OCI-LY7 (cell line): ENCODE measurements at regions of chr19 and their contacts with region 1.

Region 1: GRCh38 chr19:10112895-10113591 is 1.6 kb downstream of the P2RY11 start:
- DNase-seq: peak; percentile 73
- H3K4me3 ChIP-seq: no peak overlapping the region
- H3K27ac ChIP-seq: peak overlapping the region; percentile 55
- H3K4me1 ChIP-seq: peaks cover 28% of the 10 kb centered on the region
- CTCF ChIP-seq: peak; percentile 86

Region 2: GRCh38 chr19:9891609-9892373 is 221.3 kb before region 1 on chr19:
- CTCF ChIA-PET with region 1: no interaction called
- POLR2A ChIA-PET with region 1: no interaction called
- intact Hi-C with region 1: no loop called
- DNase-seq: no peak
- H3K4me3 ChIP-seq: no peak overlapping the region
- H3K27ac ChIP-seq: no peak overlapping the region
- H3K4me1 ChIP-seq: no peaks in the 10 kb centered on the region
- CTCF ChIP-seq: no peak

Region 3: DNA sequence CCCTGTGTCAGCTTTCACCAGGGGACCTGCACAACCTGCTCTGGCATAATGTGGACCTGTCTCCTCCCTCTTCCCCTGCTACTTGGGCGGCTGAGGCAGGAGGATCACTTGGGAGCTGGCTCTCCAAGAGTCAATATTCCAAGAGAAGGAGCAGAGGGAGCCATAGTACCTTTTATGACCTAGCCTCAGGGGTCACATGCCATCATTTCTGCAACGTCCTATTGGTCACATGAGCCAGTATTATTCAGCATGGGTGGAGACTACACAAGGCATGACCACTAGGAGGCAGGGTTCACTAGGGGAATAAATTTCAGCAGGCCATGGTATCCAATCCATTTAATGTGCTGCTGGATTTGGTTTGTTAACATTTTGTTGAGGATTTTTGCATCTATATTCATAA is 38.9 kb before region 1 on chr19:
- CTCF ChIA-PET with region 1: no interaction called
- POLR2A ChIA-PET with region 1: no interaction called
- intact Hi-C with region 1: loop called (anchors 1 kb)
- DNase-seq: peak; percentile 58
- H3K4me3 ChIP-seq: no peak overlapping the region
- H3K27ac ChIP-seq: no peak overlapping the region
- H3K4me1 ChIP-seq: no peaks in the 10 kb centered on the region
- CTCF ChIP-seq: peak; percentile 72

Region 4: DNA sequence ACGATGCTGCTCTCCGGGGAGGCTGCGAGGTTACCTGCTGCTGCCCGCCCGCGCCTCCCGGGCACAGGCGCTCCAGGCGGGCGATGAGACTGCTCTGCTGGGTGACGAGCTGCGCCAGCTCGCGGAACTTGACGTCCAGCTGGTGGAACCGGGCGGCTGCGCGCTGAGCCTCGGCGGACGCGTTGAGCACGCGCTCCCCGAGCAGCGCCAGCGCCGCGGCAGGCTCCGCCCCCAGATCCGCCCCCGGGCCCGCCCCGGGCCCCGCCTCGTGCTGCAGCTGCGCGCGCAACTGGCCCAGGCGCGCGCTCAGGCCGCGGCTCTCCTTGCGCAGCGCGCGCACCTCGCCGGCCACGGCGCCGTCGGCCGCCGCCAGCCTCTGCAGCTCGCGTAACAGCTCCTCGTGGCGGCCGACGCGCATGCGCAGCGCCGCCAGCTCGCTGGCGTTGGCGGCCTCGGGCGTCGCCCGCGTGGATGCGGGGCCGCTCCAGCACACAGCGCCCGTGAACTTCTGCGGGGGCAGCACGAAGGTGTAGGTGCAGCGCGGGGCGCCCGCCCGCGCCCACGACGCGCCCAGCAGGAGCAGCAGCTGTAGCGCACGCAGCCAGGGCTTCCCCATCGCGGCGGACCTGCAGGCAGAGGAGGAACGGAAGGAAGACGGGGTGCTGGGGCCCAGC is 17.0 kb before region 1 on chr19:
- CTCF ChIA-PET with region 1: interaction called, 5 read pairs
- POLR2A ChIA-PET with region 1: interaction called, 3 read pairs
- intact Hi-C with region 1: loop called (anchors 1 kb)
- DNase-seq: peak; percentile 95
- H3K4me3 ChIP-seq: peak overlapping the region; percentile 65
- H3K27ac ChIP-seq: peak overlapping the region; percentile 56
- H3K4me1 ChIP-seq: peaks cover 42% of the 10 kb centered on the region
- CTCF ChIP-seq: no peak

Region 5: GRCh38 chr19:10173257-10173926 is 60.3 kb after region 1 on chr19:
- CTCF ChIA-PET with region 1: no interaction called
- POLR2A ChIA-PET with region 1: no interaction called
- intact Hi-C with region 1: no loop called
- DNase-seq: no peak
- H3K4me3 ChIP-seq: no peak overlapping the region
- H3K27ac ChIP-seq: no peak overlapping the region
- H3K4me1 ChIP-seq: peaks cover 32% of the 10 kb centered on the region
- CTCF ChIP-seq: no peak